ENCODE measurements at regions of chr17 and their contacts with region 1.

Region 1: DNA sequence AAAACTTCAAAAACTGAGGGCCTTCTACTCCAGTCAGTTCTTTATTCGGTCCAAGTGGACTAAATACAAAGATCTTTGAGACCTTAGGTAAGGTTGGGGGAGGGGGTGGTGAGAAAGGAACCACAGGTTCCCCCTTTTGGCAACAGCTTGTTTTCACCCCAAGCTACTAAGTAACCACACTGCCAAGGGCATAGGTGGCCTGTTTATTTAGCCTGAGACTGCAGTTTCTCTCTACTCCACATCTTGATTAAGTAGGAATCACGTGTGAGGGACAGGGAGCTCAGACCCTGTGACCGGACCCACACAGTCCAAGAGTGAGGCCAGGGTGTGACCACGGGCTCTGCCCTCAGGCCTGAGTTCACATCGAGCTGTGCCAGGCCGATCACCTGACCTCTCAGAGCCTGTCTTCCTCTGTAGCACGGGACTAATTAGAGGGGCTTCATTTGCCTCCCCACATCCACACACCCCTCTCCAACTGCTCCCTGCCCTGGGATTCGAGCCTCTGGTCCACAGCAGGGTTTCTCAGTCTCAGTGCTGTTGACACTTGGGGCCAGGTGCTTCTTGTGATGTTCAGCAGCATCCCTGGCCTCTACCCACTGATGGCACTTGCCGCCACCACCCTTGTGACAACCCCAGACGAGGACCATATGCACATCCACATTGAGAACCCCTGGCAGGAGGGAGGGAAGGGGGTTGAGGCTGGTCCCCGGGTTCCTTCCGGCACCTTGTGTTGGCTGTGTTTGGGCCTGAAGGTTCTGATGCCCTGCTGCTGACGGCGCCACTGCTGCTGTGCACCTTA is 17.8 kb downstream of the ST6GALNAC2 start:
- DNase-seq: no peak

Region 2: DNA sequence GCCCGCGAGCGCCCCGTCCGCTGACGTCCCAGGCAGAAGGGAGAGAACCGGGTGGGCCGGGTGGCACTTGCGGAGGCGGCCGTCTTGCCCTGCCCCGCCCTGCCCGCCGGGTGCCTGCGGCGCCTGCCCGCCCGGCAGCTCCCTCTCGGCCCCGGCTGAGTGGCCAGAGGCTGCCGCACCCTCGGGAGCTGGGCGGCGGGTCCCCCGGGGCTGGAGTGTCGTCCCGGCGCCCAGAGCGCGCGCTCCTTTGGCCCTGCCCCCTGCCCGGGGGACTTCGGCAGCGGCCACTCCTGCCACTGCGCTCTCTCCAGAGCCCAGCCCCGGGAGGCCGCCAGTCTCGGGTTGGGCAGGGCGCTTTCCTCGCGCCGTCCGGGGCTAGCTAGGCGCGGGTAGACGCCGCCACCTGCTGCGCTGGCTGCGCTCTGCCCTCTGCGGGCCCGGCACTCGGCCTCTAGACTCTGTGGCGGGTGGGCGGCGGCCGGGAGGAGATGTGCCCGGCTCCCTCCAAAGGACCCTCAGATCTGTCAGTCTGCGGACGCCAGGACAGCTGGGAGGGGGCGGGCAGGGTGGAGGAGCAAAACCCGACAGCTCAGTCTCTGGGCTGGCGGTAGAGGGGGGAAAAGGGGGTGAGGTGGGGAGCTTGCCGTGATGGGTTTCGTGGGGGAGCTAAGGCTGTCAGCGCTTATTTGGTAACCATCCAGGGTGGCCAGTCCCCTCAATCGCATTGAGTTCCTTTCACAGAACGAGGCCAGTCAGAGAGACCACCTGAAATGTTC is 18.2 kb after region 1 on chr17 and contains the start of gene ST6GALNAC2:
- CTCF ChIA-PET with region 1: no interaction called
- POLR2A ChIA-PET with region 1: interaction called, 11 read pairs
- DNase-seq: peak; percentile 66

Measured in HEK293T (cell line).